Posterior vena cava (tissue), 2 donors: ENCODE measurements at regions of chr15 and their contacts with region 1.

Region 1: DNA sequence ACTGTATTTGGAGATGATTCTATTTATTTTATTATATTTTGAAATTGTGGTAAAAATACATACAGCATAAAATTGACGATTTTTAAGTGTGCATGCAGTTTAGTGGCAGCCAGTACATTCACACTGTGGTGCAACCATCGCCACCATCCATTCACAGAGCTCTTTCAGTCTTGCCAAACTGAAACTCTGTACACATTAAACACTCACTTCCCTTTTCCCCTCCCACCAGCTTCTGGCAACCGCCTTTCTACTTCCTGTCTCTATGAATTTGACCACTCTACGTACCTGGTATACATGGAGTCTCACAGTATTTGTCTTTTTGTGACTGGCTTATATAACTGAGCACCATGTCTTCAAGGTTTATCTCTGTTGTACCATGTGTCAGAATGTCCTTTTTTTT is 303.3 kb upstream of the ATP10A start:
- DNase-seq: no peak

Region 2: GRCh38 chr15:25805031-25805430 is 361.4 kb before region 1 on chr15:
- intact Hi-C with region 1: loop called in 1 of 2 experiments (anchors 10 kb)
- DNase-seq: peak; percentile 69

Region 3: GRCh38 chr15:26065723-26066122 is 100.7 kb before region 1 on chr15:
- intact Hi-C with region 1: no loop called
- DNase-seq: no peak

Region 4: GRCh38 chr15:26095710-26096330 is 70.6 kb before region 1 on chr15:
- intact Hi-C with region 1: no loop called
- DNase-seq: no peak

Region 5: DNA sequence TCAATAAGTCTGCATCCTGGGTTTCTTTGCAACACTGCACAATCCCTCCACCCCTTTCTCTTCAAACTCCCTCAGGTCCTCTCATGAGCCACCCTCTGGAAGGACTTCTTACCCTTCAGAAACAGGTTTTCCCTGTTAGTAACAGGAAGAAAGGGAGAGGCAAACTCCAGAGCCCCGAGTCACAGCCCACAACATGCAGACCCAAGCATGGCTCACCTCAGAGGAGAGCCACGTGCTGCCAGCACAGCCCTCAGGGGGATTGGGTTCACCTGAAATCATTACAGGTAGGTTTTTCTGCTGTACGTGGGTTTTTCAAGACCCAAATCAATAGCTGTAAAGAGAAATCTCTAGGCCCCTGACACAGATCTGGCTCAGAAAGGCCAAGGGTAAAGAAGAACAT is 56.4 kb after region 1 on chr15:
- intact Hi-C with region 1: no loop called
- DNase-seq: no peak